ENCODE measurements at regions of chr19 and their contacts with region 1.

Region 1: GRCh38 chr19:18322759-18323460 is at the start of gene LSM4:
- DNase-seq: peak; percentile 97 to 100
- ATAC-seq: peak; percentile 91 to 99 (median 92)
- H3K4me3 ChIP-seq: peak within 1 kb of the TSS; percentile 79
- H3K4me3 Mint-ChIP-seq: peak within 1 kb of the TSS; percentile 87
- H3K27ac ChIP-seq: peak within 1 kb of the TSS; percentile 91
- H3K27ac Mint-ChIP-seq: peak within 1 kb of the TSS; percentile 96
- H3K4me1 ChIP-seq: peaks cover 58% of the 10 kb centered on the region
- H3K4me1 Mint-ChIP-seq: peaks cover 48% of the 10 kb centered on the region in 2 donors
- H3K27me3 ChIP-seq: no peaks in the 10 kb centered on the region
- H3K27me3 Mint-ChIP-seq: no peaks in the 10 kb centered on the region
- CTCF ChIP-seq: peak; percentile 56
- total RNA-seq, gene LSM4: 42.4 to 60.8 (median 44.8) TPM

Region 2: DNA sequence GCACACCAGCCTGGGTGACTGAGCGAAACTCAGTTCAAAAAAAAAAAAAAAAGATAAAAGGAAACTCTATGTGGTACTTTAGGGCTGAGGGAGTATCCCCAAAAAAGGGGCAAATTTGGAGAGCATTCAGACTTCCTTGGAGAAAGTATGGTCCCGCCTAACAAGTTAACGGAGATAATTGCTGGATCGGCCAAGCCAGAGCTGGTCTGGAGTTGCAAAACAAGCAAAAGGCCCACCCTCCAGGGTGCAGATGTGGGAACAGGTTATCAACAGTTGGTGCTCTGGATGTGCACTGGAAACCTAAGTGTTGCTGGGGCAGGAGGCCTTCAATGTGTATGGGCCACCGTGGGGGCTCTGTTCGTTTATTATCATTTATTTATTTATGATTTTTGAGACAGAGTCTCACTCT is 51.5 kb before region 1 on chr19:
- intact Hi-C with region 1: no loop called
- DNase-seq: peak in 1 of 2 donors; percentile 57
- ATAC-seq: peak in 2 of 3 donors; percentile 3 to 6
- H3K4me3 ChIP-seq: no peak overlapping the region
- H3K4me3 Mint-ChIP-seq: peak overlapping the region; percentile 61
- H3K27ac ChIP-seq: no peak overlapping the region
- H3K27ac Mint-ChIP-seq: peak overlapping the region in 1 of 2 donors; percentile 99
- H3K4me1 ChIP-seq: peaks cover 16% of the 10 kb centered on the region
- H3K4me1 Mint-ChIP-seq: peaks cover 0 to 16% of the 10 kb centered on the region in 2 donors
- H3K27me3 ChIP-seq: no peaks in the 10 kb centered on the region
- H3K27me3 Mint-ChIP-seq: no peaks in the 10 kb centered on the region
- CTCF ChIP-seq: no peak

Region 3: GRCh38 chr19:18290302-18291018 is 32.5 kb before region 1 on chr19:
- intact Hi-C with region 1: loop called (anchors 1 kb)
- DNase-seq: peak; percentile 76 to 91
- ATAC-seq: peak; percentile 50 to 72 (median 72)
- H3K4me3 ChIP-seq: no peak overlapping the region
- H3K4me3 Mint-ChIP-seq: peak overlapping the region; percentile 82
- H3K27ac ChIP-seq: peak overlapping the region; percentile 99
- H3K27ac Mint-ChIP-seq: peak overlapping the region; percentile 89
- H3K4me1 ChIP-seq: peaks cover 67% of the 10 kb centered on the region
- H3K4me1 Mint-ChIP-seq: peaks cover 47 to 58% of the 10 kb centered on the region in 2 donors
- H3K27me3 ChIP-seq: no peaks in the 10 kb centered on the region
- H3K27me3 Mint-ChIP-seq: no peaks in the 10 kb centered on the region
- CTCF ChIP-seq: no peak

Region 4: GRCh38 chr19:18304458-18305310 is 18.2 kb before region 1 on chr19:
- intact Hi-C with region 1: loop called (anchors 1 kb)
- DNase-seq: peak; percentile 82 to 89
- ATAC-seq: peak; percentile 78 to 87 (median 79)
- H3K4me3 ChIP-seq: peak overlapping the region; percentile 59
- H3K4me3 Mint-ChIP-seq: peak overlapping the region; percentile 86
- H3K27ac ChIP-seq: peak overlapping the region; percentile 99
- H3K27ac Mint-ChIP-seq: peak overlapping the region; percentile 96 to 97
- H3K4me1 ChIP-seq: peaks cover 64% of the 10 kb centered on the region
- H3K4me1 Mint-ChIP-seq: peaks cover 17 to 23% of the 10 kb centered on the region in 2 donors
- H3K27me3 ChIP-seq: no peaks in the 10 kb centered on the region
- H3K27me3 Mint-ChIP-seq: no peaks in the 10 kb centered on the region
- CTCF ChIP-seq: no peak

Region 5: GRCh38 chr19:18339723-18340122 is 16.8 kb after region 1 on chr19:
- intact Hi-C with region 1: no loop called
- DNase-seq: no peak
- ATAC-seq: no peak
- H3K4me3 ChIP-seq: peak overlapping the region; percentile 94
- H3K4me3 Mint-ChIP-seq: peak overlapping the region; percentile 88
- H3K27ac ChIP-seq: peak overlapping the region; percentile 24
- H3K27ac Mint-ChIP-seq: peak overlapping the region; percentile 58 to 86
- H3K4me1 ChIP-seq: peaks cover 20% of the 10 kb centered on the region
- H3K4me1 Mint-ChIP-seq: peaks cover 16% of the 10 kb centered on the region in 2 donors
- H3K27me3 ChIP-seq: no peaks in the 10 kb centered on the region
- H3K27me3 Mint-ChIP-seq: no peaks in the 10 kb centered on the region
- CTCF ChIP-seq: no peak

Measured in natural killer cell (primary cell).